AG04450 (cell line): ENCODE measurements at regions of chr1 and their contacts with region 1.

Region 1: DNA sequence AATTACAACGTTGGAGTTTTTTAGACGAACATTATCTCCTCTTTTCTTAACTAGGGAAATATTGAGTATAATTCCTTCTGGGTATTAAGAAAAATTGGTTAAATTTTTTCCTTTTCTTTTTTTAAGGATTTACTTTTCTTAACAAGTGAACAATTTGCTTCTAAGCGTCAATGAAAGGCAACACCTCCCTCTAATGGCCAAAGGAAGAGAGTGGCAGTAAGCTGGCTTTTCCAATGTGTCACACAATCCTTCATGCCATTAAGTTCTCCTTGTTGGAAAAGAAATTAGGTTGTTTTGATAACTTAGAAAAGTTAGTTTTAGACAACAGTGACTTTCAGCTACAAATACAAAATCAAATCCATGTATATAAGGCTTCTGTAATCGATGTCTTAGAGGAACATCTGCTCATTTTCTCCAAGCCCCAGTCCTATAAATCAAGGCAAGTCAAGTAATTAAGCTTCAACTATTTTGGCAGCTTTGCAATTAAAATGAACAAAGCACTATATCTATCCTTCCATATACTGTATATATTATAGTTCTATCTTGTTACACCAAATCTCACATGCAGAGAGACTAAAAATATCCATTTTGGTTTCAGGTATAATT is 62.8 kb downstream of the EDEM3 start:
- DNase-seq: peak; percentile 3
- H3K4me3 ChIP-seq: no peak overlapping the region
- H3K27ac ChIP-seq: no peak overlapping the region
- H3K27me3 ChIP-seq: no peaks in the 10 kb centered on the region
- CTCF ChIP-seq: peak; percentile 87

Region 2: DNA sequence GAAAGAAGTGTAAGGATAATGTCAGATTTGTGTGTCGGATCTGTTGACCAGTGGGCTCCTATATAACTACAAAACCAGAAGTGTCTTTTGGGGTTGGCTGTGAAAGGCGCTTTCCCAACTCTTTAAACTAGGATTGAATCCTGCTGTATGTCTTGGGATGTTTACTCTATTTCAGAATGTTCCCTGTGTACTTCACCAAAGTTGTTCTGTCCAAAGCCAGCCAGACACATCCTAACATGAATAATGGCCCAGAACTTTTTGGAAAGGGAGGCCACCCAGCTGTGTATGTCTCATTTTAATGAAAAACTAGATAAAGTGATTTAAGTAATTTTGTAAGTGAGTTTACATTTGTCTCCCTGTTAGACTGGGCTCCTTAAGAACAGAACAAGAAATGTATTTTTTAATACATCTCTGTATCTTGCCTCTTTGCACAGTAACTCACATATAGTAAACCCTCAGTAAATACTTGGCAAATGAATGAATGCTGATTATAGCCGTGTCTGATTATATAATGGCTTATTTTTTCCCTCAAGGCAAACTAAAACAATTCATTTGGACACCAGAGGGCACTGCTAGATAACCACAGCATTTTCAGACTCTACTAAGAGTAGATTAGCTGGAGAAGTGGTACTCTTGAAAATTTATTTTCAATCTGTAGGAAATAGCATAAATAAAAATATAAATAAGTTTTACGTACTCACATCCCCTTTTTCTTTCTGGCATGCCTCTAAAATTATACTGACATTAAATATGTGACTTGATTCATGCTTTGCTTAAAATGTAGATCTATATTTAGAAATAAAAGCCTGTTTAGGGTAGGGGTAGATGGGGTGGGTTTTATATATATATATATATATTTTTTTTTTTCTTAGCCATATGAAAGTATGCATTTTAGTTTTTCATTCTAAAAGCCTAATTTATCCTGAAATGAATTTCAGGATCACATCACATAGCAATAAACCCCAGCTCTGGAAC is 616.5 kb before region 1 on chr1:
- CTCF ChIA-PET with region 1: interaction called, 13 read pairs
- POLR2A ChIA-PET with region 1: no interaction called
- DNase-seq: no peak
- H3K4me3 ChIP-seq: no peak overlapping the region
- H3K27ac ChIP-seq: no peak overlapping the region
- H3K27me3 ChIP-seq: no peaks in the 10 kb centered on the region
- CTCF ChIP-seq: peak; percentile 80

Region 3: DNA sequence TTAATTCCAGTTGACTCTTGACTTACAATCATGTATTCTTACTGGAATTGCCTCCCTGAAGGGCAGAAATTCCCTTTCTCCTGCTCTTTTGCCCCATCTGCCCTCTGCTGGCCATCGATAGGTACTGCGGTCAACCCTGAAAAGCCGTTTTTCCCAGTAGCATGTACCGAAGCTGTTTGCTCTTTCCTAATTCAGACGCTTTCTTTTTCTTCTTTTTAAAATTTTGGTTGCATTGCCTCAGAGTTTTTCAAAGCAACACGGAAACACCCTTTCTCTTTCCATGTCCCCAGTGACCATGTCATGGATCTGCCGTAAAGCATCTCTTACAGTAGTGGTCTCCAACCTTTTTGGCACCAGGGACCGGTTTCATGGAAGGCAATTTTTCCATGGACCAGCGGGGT is 469.2 kb before region 1 on chr1:
- CTCF ChIA-PET with region 1: interaction called, 10 read pairs
- POLR2A ChIA-PET with region 1: no interaction called
- DNase-seq: no peak
- H3K4me3 ChIP-seq: peak overlapping the region; percentile 32
- H3K27ac ChIP-seq: no peak overlapping the region
- H3K27me3 ChIP-seq: peaks cover 2% of the 10 kb centered on the region
- CTCF ChIP-seq: peak; percentile 97

Region 4: GRCh38 chr1:184242507-184242943 is 449.3 kb before region 1 on chr1:
- CTCF ChIA-PET with region 1: interaction called, 11 read pairs
- POLR2A ChIA-PET with region 1: no interaction called
- DNase-seq: peak; percentile 49
- H3K4me3 ChIP-seq: no peak overlapping the region
- H3K27ac ChIP-seq: no peak overlapping the region
- H3K27me3 ChIP-seq: peaks cover 6% of the 10 kb centered on the region
- CTCF ChIP-seq: no peak

Region 5: DNA sequence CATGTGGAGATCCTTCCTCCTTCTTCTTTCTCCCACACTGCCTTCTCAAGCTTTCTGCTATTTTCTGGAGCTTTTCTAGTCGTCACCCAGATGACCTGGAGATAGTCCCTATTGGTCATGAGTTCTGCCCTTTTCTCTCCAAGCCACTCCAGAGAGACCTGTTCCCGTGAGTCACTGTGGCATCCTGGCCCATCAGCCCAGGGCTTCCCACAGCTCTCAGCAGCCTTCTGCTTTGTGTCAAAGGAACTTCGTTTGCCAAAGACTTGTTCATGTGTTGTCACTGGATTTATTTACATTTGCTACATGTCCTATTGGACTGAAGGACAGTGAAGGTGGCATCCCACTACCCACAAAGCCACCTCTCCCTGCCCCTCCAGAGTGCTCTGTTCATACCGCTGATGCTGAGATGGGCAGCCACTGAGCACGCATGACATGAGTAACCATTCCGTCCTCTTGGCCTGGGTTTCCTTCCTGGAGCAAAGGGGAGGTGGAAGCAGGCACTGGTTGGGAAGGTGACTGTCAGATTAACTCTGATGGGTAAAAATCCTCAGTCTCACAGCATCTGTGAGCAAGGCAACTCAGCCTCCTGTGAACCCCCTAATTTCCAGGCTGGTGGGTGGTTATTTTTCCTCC is 56.4 kb before region 1 on chr1:
- CTCF ChIA-PET with region 1: no interaction called
- POLR2A ChIA-PET with region 1: no interaction called
- DNase-seq: no peak
- H3K4me3 ChIP-seq: no peak overlapping the region
- H3K27ac ChIP-seq: no peak overlapping the region
- H3K27me3 ChIP-seq: peaks cover 12% of the 10 kb centered on the region
- CTCF ChIP-seq: no peak

Region 6: DNA sequence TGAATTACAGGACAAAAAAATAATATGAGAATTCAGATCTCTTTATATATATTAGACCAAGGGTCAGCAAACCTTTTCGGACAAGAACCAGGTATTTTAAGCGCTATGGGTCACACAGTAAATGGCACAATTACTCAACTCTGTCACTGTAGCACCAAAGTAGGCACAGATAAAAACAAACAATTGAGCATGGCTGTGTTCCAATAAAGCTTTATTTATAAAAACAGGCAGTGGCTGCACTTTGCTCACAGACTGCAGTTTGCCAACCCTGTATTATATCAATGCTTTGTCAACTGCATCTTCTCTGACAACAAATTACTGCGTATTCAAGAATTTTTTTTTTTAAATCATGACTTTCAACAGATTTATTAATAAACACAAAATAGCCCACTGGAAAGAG is 33.0 kb after region 1 on chr1:
- CTCF ChIA-PET with region 1: no interaction called
- POLR2A ChIA-PET with region 1: no interaction called
- DNase-seq: no peak
- H3K4me3 ChIP-seq: no peak overlapping the region
- H3K27ac ChIP-seq: no peak overlapping the region
- H3K27me3 ChIP-seq: no peaks in the 10 kb centered on the region
- CTCF ChIP-seq: no peak